PC-9 (cell line): ENCODE measurements at regions of chr13 and their contacts with region 1.

Region 1: DNA sequence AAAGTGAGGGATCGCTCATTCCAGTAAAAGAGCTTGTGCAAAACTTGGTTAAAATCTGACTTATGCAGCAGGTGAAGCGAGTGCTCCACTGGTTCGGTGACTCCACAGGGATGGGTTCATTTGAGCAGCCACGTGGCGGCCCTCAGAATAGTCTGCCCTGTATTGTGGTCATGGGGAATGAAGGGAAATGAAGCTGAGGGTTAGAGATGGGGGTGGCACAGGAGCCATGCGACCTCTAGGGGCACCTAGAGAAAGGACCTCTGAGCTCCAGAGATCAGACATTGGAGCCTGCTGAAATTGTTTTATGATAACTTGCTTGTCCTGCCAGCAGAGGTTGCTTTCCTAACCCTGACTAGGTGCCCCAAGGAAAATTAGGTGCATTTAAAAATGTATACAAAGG is 26.6 kb downstream of the CBY2 start:
- DNase-seq: no peak
- H3K4me3 ChIP-seq: no peak overlapping the region
- H3K27ac ChIP-seq: no peak overlapping the region
- H3K4me1 ChIP-seq: no peaks in the 10 kb centered on the region
- H3K27me3 ChIP-seq: peaks cover 64% of the 10 kb centered on the region
- CTCF ChIP-seq: peak; percentile 30; the same call in 1 of the 2 replicates

Region 2: GRCh38 chr13:45511310-45512097 is 217.3 kb before region 1 on chr13:
- CTCF ChIA-PET with region 1: no interaction called
- POLR2A ChIA-PET with region 1: no interaction called
- intact Hi-C with region 1: loop called (anchors 2 kb)
- DNase-seq: peak; percentile 29 to 55
- H3K4me3 ChIP-seq: no peak overlapping the region
- H3K27ac ChIP-seq: peak overlapping the region; percentile 27
- H3K4me1 ChIP-seq: peaks cover 4% of the 10 kb centered on the region; the same call in 1 of the 2 replicates
- H3K27me3 ChIP-seq: no peaks in the 10 kb centered on the region
- CTCF ChIP-seq: peak; percentile 94

Region 3: DNA sequence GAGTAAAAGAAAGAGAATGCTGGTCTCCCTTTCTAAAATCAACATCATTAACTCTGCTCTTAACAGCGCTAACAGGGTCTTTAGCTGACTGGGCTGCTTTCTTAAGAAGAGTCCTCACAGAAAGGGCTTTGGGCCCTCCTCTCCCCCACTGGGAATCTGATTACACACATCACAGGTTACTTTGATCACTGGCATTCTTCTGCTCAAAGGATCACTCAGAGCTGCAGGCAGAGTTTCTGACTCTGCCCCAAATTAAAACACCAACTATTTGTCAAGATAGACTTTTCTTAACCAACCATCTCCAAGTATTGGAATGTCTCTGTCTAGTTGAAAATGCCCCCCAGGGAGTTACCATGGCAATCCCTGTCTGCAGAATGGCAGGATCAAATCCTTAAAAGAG is 153.9 kb after region 1 on chr13:
- CTCF ChIA-PET with region 1: interaction called, 16 read pairs
- POLR2A ChIA-PET with region 1: no interaction called
- intact Hi-C with region 1: no loop called
- DNase-seq: no peak
- H3K4me3 ChIP-seq: no peak overlapping the region
- H3K27ac ChIP-seq: no peak overlapping the region
- H3K4me1 ChIP-seq: no peaks in the 10 kb centered on the region
- H3K27me3 ChIP-seq: peaks cover 3% of the 10 kb centered on the region
- CTCF ChIP-seq: no peak